Pancreas (tissue), 10 donors: ENCODE measurements at regions of chr10 and their contacts with region 1.

Region 1: DNA sequence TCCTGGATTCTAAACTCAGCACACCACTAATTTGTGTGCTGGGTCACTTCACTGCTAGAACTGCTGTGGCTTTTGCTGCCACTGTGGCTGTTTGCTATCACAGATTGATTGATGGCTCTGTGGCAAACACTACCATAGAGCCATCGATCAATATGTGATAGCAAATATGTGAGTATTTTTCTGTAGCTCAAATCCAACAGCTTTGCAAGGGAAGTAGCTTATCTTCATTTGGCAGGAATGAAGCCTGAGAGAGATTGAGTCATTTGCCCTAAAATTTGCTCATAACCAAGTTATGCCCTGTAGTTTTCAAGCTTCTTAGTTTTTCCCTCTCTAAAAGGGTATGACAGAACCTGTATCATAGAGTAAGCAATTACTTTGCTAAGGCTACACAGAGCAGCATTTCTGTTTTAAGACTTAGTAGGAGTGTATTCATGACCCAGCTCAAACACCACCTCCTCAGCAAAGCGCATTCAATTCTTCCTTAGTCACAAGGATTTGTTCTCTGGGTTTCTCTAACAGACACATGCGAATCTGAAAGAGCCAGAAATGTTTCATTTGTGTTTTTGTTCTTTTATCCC is 43.1 kb downstream of the MINPP1 start:
- DNase-seq: no peak
- ATAC-seq: peak; percentile 43 to 75 (median 60)
- H3K4me3 ChIP-seq: no peak overlapping the region
- H3K27ac ChIP-seq: no peak overlapping the region
- H3K4me1 ChIP-seq: peaks cover 11 to 20% (median 11%) of the 10 kb centered on the region in 3 donors
- H3K27me3 ChIP-seq: no peaks in the 10 kb centered on the region
- CTCF ChIP-seq: no peak

Region 2: DNA sequence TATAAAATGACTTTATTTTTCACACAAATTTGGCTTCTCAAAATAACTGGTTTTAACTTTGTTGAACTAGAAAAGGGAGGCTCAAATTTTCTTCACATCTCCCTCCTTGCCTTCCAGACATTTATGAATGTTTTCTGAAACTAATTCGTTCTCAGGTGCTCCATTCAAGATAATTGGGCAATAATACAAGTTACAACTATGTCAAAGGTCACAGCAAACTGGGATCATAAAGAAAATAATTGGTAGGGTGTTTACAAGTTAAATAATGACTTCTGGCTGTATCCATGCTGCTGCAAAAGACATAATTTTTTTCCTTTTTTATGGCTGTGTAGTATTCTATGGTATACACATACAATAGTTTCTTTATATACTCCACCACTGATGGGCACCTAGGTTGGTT is 32.2 kb after region 1 on chr10:
- intact Hi-C with region 1: loop called in 1 of 3 experiments (anchors 5 kb)
- DNase-seq: no peak
- ATAC-seq: no peak
- H3K4me3 ChIP-seq: no peak overlapping the region
- H3K27ac ChIP-seq: no peak overlapping the region
- H3K4me1 ChIP-seq: peaks cover 0 to 8% (median 3%) of the 10 kb centered on the region in 3 donors
- H3K27me3 ChIP-seq: no peaks in the 10 kb centered on the region
- CTCF ChIP-seq: no peak